ENCODE measurements at regions of chr16 and their contacts with region 1.

Region 1: DNA sequence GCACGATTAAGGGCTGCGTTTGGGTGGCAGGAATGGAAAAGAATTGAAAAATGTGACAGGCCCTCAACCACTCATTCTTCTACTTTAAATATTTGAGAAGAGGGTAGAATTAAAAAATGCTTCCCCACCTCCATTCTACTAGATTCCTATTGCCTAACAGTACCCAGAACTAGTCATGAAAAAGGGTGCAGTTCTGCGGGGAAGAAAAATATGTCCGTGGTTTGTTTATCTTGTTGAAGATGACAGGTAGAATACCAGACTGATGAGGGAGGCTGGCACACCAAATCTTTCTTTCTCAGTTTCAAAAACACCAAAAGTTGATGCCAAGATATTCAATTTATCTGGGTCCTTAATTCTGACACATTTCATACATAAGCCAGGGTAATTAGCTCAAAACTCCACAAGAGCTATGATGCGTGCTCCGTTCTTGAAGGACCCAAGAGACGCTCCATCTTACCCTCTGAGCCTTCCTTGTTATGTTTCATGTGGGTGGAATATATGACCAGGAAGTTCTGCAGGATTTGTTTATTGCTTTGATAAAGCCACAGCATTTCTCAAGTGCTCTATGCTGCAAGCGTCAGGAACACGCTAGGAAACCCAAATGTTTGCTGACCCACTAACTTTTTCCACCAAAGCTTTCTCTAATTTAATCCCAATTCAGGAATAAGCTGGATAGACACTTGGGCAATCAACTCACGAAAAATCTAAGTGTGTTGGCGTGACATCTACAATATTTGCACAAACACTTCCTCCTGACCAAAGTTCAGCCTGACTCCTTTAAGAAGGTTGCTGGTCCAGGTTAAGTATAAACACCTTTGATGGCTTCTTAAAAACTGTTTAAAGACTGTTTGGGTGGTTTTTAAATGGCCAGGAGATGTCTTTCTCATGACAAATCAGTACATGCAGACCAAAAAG is 20.6 kb upstream of the GAN start:
- DNase-seq: no peak
- H3K4me3 ChIP-seq: no peak overlapping the region
- CTCF ChIP-seq: no peak

Region 2: DNA sequence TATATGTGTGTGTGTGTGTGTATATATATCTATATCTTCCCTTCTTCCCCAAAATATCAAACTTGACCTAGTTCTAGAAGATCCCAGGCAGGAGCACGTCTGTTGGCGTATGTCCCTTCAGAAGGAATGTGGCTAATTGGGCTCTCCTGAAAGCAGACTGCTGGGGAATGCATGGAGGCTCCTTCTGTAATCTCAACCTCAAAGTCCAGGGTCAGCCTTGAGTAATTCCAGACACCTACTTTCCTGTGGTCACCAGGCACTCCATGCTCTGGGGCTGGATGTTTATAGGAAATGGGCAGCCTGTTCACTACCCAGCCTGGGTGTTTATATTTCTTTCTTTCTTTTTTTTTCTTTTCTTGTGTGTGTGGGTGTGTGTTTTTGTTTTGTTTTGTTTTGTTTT is 42.3 kb before region 1 on chr16:
- in situ Hi-C with region 1: loop called (anchors 5 kb)
- DNase-seq: no peak
- H3K4me3 ChIP-seq: no peak overlapping the region
- CTCF ChIP-seq: no peak